CD14-positive monocyte (primary cell): ENCODE measurements at regions of chr16 and their contacts with region 1.

Region 1: GRCh38 chr16:83807710-83808572 is at the start of gene HSBP1:
- DNase-seq: peak; percentile 95 to 96 (median 96)
- H3K4me3 ChIP-seq: peak within 1 kb of the TSS; percentile 61 to 94 (median 62)
- H3K4me3 Mint-ChIP-seq: peak within 1 kb of the TSS; percentile 96 to 97
- H3K27ac ChIP-seq: peak within 1 kb of the TSS; percentile 90 to 93
- H3K27ac Mint-ChIP-seq: peak within 1 kb of the TSS; percentile 93 to 99 (median 98)
- H3K4me1 ChIP-seq: peaks cover 52 to 61% of the 10 kb centered on the region in 2 donors
- H3K4me1 Mint-ChIP-seq: peaks cover 68% of the 10 kb centered on the region
- H3K27me3 ChIP-seq: no peaks in the 10 kb centered on the region
- H3K27me3 Mint-ChIP-seq: no peaks in the 10 kb centered on the region
- CTCF ChIP-seq: no peak
- polyA plus RNA-seq, gene HSBP1: 16.9 to 194 (median 178) TPM

Region 2: GRCh38 chr16:83744441-83744981 is 63.4 kb before region 1 on chr16:
- intact Hi-C with region 1: loop called (anchors 5 kb)
- DNase-seq: peak; percentile 84 to 97 (median 92)
- H3K4me3 ChIP-seq: no peak overlapping the region
- H3K4me3 Mint-ChIP-seq: peak overlapping the region in 1 of 2 donors; percentile 54
- H3K27ac ChIP-seq: peak overlapping the region; percentile 66 to 70
- H3K27ac Mint-ChIP-seq: peak overlapping the region; percentile 61 to 97 (median 80)
- H3K4me1 ChIP-seq: peaks cover 17 to 18% of the 10 kb centered on the region in 2 donors
- H3K4me1 Mint-ChIP-seq: peaks cover 21% of the 10 kb centered on the region
- H3K27me3 ChIP-seq: no peaks in the 10 kb centered on the region
- H3K27me3 Mint-ChIP-seq: peaks cover 0 to 4% (median 3%) of the 10 kb centered on the region in 3 donors
- CTCF ChIP-seq: no peak

Region 3: DNA sequence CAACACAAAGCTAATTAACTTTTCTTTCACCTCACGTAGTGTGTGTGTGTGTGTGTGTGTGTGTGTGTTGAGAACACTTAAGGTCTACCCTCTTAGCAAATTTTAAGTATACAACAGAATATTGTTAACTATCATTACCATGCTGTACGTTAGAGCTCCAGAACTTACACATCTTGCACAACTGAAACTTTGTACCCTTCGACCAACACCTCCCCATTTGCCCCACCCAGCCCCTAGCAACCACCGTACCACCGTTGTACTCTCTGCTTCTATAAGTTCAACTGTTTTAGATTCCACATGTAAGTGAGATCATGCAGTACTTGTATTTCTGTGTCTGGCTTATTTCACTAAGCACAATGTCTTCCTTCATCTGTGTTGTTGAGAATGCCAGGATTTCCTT is 62.9 kb after region 1 on chr16:
- intact Hi-C with region 1: no loop called
- DNase-seq: no peak
- H3K4me3 ChIP-seq: no peak overlapping the region
- H3K4me3 Mint-ChIP-seq: no peak overlapping the region
- H3K27ac ChIP-seq: no peak overlapping the region
- H3K27ac Mint-ChIP-seq: no peak overlapping the region
- H3K4me1 ChIP-seq: no peaks in the 10 kb centered on the region
- H3K4me1 Mint-ChIP-seq: peaks cover 1% of the 10 kb centered on the region
- H3K27me3 ChIP-seq: no peaks in the 10 kb centered on the region
- H3K27me3 Mint-ChIP-seq: peaks cover 1 to 14% (median 3%) of the 10 kb centered on the region in 3 donors
- CTCF ChIP-seq: no peak